ENCODE measurements at regions of chr10 and their contacts with region 1.

Region 1: GRCh38 chr10:132142411-132143161 is 44.2 kb upstream of the DPYSL4 start:
- DNase-seq: peak; percentile 75
- ATAC-seq: peak; percentile 80
- H3K4me3 Mint-ChIP-seq: no peak overlapping the region
- H3K27ac Mint-ChIP-seq: no peak overlapping the region
- H3K4me1 Mint-ChIP-seq: peaks cover 7% of the 10 kb centered on the region
- H3K27me3 Mint-ChIP-seq: no peaks in the 10 kb centered on the region
- CTCF ChIP-seq: peak; percentile 94

Region 2: DNA sequence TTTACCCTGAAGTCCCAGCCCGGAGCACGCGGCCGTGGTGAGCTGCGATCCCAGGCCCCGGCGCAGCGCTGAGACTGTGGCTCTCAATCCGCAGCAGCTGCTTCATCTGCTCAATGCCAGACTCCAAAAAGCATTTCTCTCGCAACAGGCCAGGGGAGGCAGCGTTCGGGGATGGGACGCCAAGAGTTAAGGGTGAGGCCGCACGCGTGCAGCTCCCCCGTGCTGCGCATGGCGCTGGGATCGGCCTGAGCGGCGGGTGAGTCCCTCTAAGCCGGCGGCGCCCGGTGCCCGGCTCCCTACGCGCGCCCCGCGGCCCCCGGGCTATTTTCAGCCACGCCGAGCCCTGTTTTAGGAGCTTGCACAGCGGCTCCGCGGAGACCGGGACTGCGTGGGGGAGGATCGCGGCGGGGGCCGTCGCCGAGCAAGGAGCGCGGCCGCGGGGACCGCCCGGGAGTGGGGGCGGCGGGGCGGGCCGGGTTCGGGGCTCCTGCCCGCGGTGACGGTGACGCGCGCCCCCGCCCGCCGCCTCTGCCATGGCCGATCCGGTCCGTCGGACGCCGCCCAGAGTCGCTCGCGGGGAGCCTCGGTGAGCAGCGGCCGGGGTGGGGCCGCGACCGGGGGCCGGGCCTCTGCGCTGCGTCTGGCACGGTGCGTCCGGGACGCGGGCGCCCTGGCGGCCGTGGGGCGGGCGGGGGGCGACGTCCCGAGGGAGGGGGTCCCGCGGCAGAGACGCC is 106.3 kb before region 1 on chr10:
- CTCF ChIA-PET with region 1: interaction called, 10 read pairs
- POLR2A ChIA-PET with region 1: no interaction called
- DNase-seq: peak; percentile 58
- ATAC-seq: peak; percentile 26
- H3K4me3 Mint-ChIP-seq: peak overlapping the region; percentile 68
- H3K27ac Mint-ChIP-seq: no peak overlapping the region
- H3K4me1 Mint-ChIP-seq: peaks cover 26% of the 10 kb centered on the region
- H3K27me3 Mint-ChIP-seq: peaks cover 55% of the 10 kb centered on the region
- CTCF ChIP-seq: no peak

Region 3: DNA sequence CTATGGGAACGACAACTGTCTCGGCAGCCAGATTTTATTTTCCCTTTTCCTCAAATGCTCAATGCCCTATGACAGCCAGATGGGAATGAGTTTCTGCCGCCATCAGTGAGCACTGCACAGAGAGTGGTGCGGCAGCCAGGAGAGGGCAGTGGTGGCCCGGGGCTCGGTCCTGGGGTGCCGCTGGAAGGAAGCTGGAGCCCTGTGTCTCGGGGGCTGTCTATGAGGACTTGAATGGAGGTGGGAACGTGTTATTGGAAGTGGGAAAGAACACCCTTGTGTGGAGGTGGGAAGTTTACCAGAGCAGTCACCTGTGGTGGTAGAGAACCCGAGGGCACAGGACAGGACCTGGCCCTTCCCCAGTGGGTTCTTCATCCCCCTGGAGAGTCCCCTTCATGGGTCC is 41.1 kb before region 1 on chr10:
- CTCF ChIA-PET with region 1: interaction called, 20 read pairs
- POLR2A ChIA-PET with region 1: no interaction called
- DNase-seq: no peak
- ATAC-seq: peak; percentile 74
- H3K4me3 Mint-ChIP-seq: no peak overlapping the region
- H3K27ac Mint-ChIP-seq: no peak overlapping the region
- H3K4me1 Mint-ChIP-seq: no peaks in the 10 kb centered on the region
- H3K27me3 Mint-ChIP-seq: no peaks in the 10 kb centered on the region
- CTCF ChIP-seq: no peak

Measured in WTC11 (cell line).